Caco-2 (cell line): ENCODE measurements at regions of chr2 and their contacts with region 1.

Region 1: GRCh38 chr2:208254871-208255556 is at the start of gene IDH1:
- DNase-seq: peak; percentile 98 to 99
- H3K4me3 ChIP-seq: peak within 1 kb of the TSS; percentile 67
- H3K4me3 Mint-ChIP-seq: peak within 1 kb of the TSS; percentile 85
- H3K27ac Mint-ChIP-seq: peak within 1 kb of the TSS; percentile 81
- H3K4me1 ChIP-seq: peaks cover 36% of the 10 kb centered on the region
- H3K4me1 Mint-ChIP-seq: peaks cover 18% of the 10 kb centered on the region
- H3K27me3 ChIP-seq: no peaks in the 10 kb centered on the region
- H3K27me3 Mint-ChIP-seq: no peaks in the 10 kb centered on the region
- CTCF ChIP-seq: peak; percentile 51 to 76
- total RNA-seq, gene IDH1: 265 and 293 TPM in 2 replicates

Region 2: GRCh38 chr2:208101716-208102631 is 153.0 kb before region 1 on chr2:
- CTCF ChIA-PET with region 1: interaction called, 32 read pairs
- POLR2A ChIA-PET with region 1: interaction called, 4 read pairs
- intact Hi-C with region 1: loop called (anchors 1 kb)
- DNase-seq: peak in 1 of 2 experiments; percentile 50
- H3K4me3 ChIP-seq: no peak overlapping the region
- H3K4me3 Mint-ChIP-seq: no peak overlapping the region
- H3K27ac Mint-ChIP-seq: peak overlapping the region; percentile 23
- H3K4me1 ChIP-seq: no peaks in the 10 kb centered on the region
- H3K4me1 Mint-ChIP-seq: peaks cover 14% of the 10 kb centered on the region
- H3K27me3 ChIP-seq: no peaks in the 10 kb centered on the region
- H3K27me3 Mint-ChIP-seq: no peaks in the 10 kb centered on the region
- CTCF ChIP-seq: peak; percentile 58 to 69

Region 3: DNA sequence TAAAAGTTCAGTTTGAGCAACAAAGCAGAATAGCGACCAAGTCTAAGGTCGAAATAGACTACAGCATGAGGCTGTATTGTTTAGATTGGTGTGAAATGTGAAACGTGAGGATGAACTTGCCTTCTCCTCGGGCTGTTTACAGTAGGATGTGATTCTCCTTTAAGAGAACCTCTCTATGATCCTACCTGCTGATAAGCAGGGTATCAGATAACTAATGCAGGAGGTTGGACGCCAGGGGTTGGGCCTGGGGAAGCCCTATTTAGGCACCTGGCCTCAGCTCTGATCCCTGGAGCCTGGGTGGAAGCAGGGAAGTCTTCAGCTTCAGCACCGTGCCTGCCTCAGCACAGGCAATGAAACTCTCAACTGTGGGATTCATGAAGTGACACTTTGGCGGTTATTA is 142.0 kb before region 1 on chr2:
- CTCF ChIA-PET with region 1: no interaction called
- POLR2A ChIA-PET with region 1: interaction called, 6 read pairs
- intact Hi-C with region 1: loop called (anchors 1 kb)
- DNase-seq: peak; percentile 74 to 81
- H3K4me3 ChIP-seq: no peak overlapping the region
- H3K4me3 Mint-ChIP-seq: peak overlapping the region; percentile 62
- H3K27ac Mint-ChIP-seq: no peak overlapping the region
- H3K4me1 ChIP-seq: peaks cover 42% of the 10 kb centered on the region
- H3K4me1 Mint-ChIP-seq: peaks cover 24% of the 10 kb centered on the region
- H3K27me3 ChIP-seq: no peaks in the 10 kb centered on the region
- H3K27me3 Mint-ChIP-seq: no peaks in the 10 kb centered on the region
- CTCF ChIP-seq: no peak

Region 4: GRCh38 chr2:208175069-208175839 is 79.8 kb before region 1 on chr2:
- CTCF ChIA-PET with region 1: interaction called, 27 read pairs
- POLR2A ChIA-PET with region 1: no interaction called
- intact Hi-C with region 1: loop called (anchors 1 kb)
- DNase-seq: peak; percentile 82 to 85
- H3K4me3 ChIP-seq: no peak overlapping the region
- H3K4me3 Mint-ChIP-seq: no peak overlapping the region
- H3K27ac Mint-ChIP-seq: no peak overlapping the region
- H3K4me1 ChIP-seq: peaks cover 16% of the 10 kb centered on the region
- H3K4me1 Mint-ChIP-seq: peaks cover 7% of the 10 kb centered on the region
- H3K27me3 ChIP-seq: no peaks in the 10 kb centered on the region
- H3K27me3 Mint-ChIP-seq: no peaks in the 10 kb centered on the region
- CTCF ChIP-seq: peak; percentile 75 to 95

Region 5: DNA sequence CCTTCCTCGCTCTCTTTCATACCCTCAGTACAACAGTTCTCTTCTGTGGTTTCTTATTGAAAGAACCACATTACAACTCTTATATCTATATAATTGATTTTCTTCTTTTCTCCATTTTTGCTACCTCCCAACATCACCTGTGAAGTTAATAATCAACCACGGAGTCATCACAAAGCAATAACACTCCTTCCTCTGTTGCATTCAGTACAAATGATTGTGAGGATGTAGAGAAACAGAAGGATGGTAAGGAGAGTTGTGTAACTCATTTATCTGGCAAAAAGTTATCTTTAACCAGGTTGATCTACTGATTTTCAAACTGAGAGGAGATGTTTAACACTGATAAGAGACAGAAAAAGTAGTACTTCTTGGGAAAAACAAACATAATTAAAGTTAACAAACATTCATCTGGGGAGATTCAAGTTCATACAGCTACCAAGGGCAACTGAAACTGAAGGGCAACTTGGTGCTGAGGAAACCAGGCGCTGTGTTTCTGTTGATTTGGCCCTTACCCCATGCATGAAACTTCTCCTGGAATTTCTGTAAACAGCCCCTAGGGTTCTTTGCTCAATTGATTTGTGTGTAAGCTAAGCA is 14.3 kb before region 1 on chr2:
- CTCF ChIA-PET with region 1: interaction called, 6 read pairs
- POLR2A ChIA-PET with region 1: no interaction called
- intact Hi-C with region 1: loop called (anchors 1 kb)
- DNase-seq: peak in 1 of 2 experiments; percentile 25
- H3K4me3 ChIP-seq: no peak overlapping the region
- H3K4me3 Mint-ChIP-seq: no peak overlapping the region
- H3K27ac Mint-ChIP-seq: no peak overlapping the region
- H3K4me1 ChIP-seq: peaks cover 12% of the 10 kb centered on the region
- H3K4me1 Mint-ChIP-seq: peaks cover 15% of the 10 kb centered on the region
- H3K27me3 ChIP-seq: no peaks in the 10 kb centered on the region
- H3K27me3 Mint-ChIP-seq: no peaks in the 10 kb centered on the region
- CTCF ChIP-seq: no peak

Region 6: GRCh38 chr2:208265801-208266552 is 11.0 kb after region 1 on chr2 and contains the start of gene PIKFYVE:
- CTCF ChIA-PET with region 1: interaction called, 19 read pairs
- POLR2A ChIA-PET with region 1: interaction called, 5 read pairs
- intact Hi-C with region 1: loop called (anchors 1 kb)
- DNase-seq: peak; percentile 96 to 98
- H3K4me3 ChIP-seq: peak within 1 kb of the TSS; percentile 71
- H3K4me3 Mint-ChIP-seq: peak within 1 kb of the TSS; percentile 87
- H3K27ac Mint-ChIP-seq: peak within 1 kb of the TSS; percentile 94
- H3K4me1 ChIP-seq: peaks cover 10% of the 10 kb centered on the region; the same call in 1 of the 2 replicates
- H3K4me1 Mint-ChIP-seq: peaks cover 32% of the 10 kb centered on the region
- H3K27me3 ChIP-seq: no peaks in the 10 kb centered on the region
- H3K27me3 Mint-ChIP-seq: no peaks in the 10 kb centered on the region
- CTCF ChIP-seq: no peak
- total RNA-seq, gene PIKFYVE: 27.9 and 31.2 TPM in 2 replicates

Region 7: GRCh38 chr2:208722731-208723130 is 467.7 kb after region 1 on chr2:
- CTCF ChIA-PET with region 1: no interaction called
- POLR2A ChIA-PET with region 1: no interaction called
- intact Hi-C with region 1: no loop called
- DNase-seq: no peak
- H3K4me3 ChIP-seq: no peak overlapping the region
- H3K4me3 Mint-ChIP-seq: no peak overlapping the region
- H3K27ac Mint-ChIP-seq: no peak overlapping the region
- H3K4me1 ChIP-seq: no peaks in the 10 kb centered on the region
- H3K4me1 Mint-ChIP-seq: peaks cover 7% of the 10 kb centered on the region
- H3K27me3 ChIP-seq: no peaks in the 10 kb centered on the region
- H3K27me3 Mint-ChIP-seq: no peaks in the 10 kb centered on the region
- CTCF ChIP-seq: no peak